Mucosa of descending colon (tissue), 3 donors: ENCODE measurements at regions of chr20 and their contacts with region 1.

Region 1: DNA sequence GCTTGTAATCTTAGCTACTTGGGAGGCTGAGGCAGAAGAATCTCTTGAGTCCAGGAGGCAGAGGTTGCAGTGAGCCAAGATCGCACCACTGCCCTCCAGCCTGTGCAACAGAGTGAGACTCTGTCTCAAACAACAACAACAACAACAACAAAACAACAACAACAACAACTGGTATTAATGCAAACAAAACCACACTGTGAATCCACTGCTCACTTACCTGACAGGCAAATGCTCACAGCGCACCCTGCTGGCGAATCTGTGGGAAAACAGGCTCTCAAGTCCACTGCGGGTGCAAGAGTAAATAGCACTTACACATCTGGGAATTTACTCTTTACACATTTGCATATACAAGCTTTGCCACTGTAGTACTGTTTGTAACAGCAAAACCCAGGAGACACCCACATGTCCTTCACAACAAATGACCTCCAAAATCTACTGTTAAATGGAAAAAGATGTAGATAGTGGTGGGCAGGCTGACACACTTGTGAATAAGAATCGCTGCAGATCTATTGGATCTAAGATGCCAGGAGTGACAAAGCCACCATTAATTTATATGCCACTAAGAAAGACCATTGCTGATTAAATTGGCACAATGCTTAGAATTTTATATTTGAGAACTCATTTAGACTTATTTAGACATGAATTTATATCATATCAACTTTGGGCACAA is 29.3 kb downstream of the NSFL1C start:
- DNase-seq: peak; percentile 71 to 82 (median 82)
- ATAC-seq: peak; percentile 83
- H3K4me3 ChIP-seq: no peak overlapping the region
- H3K4me1 ChIP-seq: peaks cover 2% of the 10 kb centered on the region
- CTCF ChIP-seq: peak; percentile 70

Region 2: DNA sequence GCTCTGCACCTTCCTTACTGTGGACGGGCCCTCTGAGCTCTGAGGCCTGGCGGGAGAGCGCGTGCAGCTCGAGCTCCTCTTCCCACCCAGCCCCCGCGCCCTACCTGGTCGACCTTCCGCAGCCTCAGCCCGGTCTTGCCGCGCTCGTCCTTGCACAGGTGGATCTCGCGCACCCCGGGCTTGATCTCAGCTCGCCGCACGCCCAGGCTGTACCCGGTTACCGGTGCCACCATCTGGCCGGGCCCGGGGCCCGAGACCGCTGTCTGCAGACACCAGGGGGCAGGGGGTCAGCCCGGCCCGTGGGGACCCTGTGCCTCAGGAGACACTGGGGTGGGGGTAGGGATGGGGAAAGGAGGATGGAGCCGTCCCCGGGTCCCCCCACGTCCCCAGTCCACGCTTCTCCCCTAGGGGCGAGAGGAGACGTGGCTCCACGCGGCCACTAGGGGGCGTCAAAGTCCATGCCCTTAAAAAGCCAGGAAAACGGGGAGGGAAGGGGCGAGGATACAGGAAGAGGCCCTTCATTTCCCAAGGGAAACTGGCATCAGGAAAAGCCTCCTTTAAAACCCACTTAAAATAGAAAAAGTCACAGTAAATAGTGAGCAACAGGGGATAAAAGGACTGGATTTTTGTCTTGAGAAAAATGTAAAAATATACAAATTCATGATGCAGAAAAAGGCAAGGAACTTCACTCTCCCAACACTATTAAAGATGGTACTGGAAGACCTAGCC is 124.0 kb before region 1 on chr20:
- intact Hi-C with region 1: loop called (anchors 5 kb)
- DNase-seq: peak; percentile 60 to 78 (median 75)
- ATAC-seq: peak; percentile 72
- H3K4me3 ChIP-seq: no peak overlapping the region
- H3K4me1 ChIP-seq: peaks cover 3% of the 10 kb centered on the region
- CTCF ChIP-seq: peak; percentile 89